Prostate gland (tissue), 2 donors: ENCODE measurements at regions of chr7 and their contacts with region 1.

Region 1: DNA sequence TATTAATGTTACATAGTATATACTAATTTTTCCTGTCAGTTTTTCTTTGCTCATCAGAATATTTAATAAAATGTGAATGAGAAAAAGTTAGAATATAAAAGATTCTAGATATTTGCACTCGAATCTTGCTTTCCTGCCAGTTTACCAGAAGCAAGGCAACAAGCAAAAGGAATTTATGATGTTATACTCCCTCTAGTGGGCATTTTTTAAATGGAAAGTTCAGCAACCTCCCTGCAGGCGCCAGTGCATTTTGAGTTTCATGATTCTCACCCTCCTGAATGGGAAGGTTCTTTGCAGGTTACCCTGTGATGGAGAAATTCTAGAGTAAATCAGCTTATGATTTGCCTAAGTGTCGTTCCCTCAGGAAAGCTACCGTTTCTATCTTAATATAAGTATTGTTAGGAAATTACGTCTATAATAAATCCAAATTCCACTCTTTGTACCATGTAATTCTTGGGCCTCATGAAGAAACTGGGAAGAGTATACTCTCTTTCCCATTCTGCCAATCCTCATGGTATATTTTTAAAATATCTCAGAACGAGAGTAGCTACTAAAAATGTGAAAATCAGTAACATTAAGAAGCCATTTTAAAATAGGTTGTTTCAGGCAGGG is 350.0 kb downstream of the CRPPA start:
- DNase-seq: no peak
- H3K4me3 ChIP-seq: no peak overlapping the region
- H3K27ac ChIP-seq: no peak overlapping the region
- H3K4me1 ChIP-seq: no peaks in the 10 kb centered on the region
- H3K27me3 ChIP-seq: no peaks in the 10 kb centered on the region
- CTCF ChIP-seq: peak; percentile 44 to 83 (median 78)
- POLR2A ChIP-seq: no peak

Region 2: GRCh38 chr7:15305002-15305600 is 766.3 kb before region 1 on chr7:
- intact Hi-C with region 1: loop called (anchors 5 kb)
- DNase-seq: no peak
- H3K4me3 ChIP-seq: no peak overlapping the region
- H3K27ac ChIP-seq: no peak overlapping the region
- H3K4me1 ChIP-seq: no peaks in the 10 kb centered on the region
- H3K27me3 ChIP-seq: no peaks in the 10 kb centered on the region
- CTCF ChIP-seq: peak in 3 of 4 experiments; percentile 41 to 45 (median 44)
- POLR2A ChIP-seq: no peak

Region 3: DNA sequence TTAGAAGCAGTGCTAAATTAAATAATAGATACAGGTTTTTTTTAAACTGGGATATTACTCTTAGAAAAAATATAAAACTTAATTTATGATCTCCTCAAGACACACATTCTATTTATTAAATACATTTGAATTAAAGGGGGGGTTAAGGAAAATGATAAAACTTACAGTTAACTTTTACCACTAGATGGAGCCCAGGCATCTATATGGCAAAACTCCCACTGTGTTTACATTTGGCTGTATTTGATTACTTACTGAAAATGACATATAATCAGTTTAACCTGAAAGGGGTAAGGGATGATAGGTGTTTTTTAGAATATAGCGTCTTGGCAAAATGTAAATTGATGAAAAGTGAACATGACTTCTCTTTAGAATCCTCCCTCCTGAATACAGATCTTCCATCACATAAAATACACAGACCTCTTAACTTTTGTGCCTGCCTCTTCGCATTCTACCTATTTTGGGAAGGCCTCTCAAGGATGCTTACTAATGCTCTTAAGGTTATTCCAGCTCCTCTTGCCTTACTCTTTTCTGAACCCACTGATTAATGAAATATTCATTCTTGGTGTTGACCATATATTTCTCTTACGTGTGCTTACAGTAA is 745.2 kb before region 1 on chr7:
- intact Hi-C with region 1: loop called (anchors 5 kb)
- DNase-seq: no peak
- H3K4me3 ChIP-seq: no peak overlapping the region
- H3K27ac ChIP-seq: no peak overlapping the region
- H3K4me1 ChIP-seq: no peaks in the 10 kb centered on the region
- H3K27me3 ChIP-seq: no peaks in the 10 kb centered on the region
- CTCF ChIP-seq: peak in 2 of 4 experiments; percentile 12 to 41
- POLR2A ChIP-seq: no peak